Heart right ventricle (tissue), 16 donors: ENCODE measurements at regions of chr14 and their contacts with region 1.

Region 1: DNA sequence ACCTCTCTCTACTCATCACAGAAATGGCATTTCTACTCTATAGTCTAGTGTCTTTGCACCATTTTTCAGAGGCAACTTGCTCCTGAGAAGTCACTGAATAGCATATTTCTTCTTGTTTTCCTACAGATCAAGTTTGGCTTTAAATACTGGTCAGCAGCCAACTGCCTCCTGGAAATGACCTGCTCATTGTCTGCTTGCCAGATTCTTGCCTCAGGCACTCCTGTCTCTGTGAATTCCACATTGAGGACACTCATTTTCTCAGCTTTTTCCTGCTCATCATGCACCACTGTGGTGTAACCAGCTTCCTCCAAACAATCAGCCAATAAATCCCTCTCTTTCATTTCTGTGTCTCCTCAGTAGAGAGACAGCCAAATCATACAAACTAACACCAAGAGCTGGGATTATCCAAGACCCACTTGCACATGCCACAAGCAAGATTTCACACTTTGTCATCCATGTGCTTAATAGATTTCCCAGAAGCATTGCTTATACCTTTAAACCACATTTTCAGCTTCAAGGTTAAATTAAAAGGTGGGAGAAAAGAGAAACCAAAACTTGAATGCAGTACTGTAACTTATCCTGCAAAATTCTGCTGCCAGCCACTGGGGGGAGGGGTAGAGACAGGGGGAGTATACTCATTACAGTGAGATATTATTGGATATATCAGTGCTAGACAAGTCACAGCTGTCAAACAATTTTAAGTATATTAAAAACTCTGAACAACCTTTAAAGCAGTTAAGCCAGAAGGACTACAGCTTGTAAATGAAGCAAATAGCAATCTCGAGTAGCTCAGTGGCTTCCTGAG is 105.0 kb downstream of the PPP2R5E start:
- DNase-seq: peak; percentile 28 to 68
- ATAC-seq: peak; percentile 31 to 79 (median 60)
- H3K4me3 ChIP-seq: peak overlapping the region in 8 of 10 donors; percentile 4 to 31 (median 18)
- H3K27ac ChIP-seq: peak overlapping the region in 9 of 10 donors; percentile 51 to 81 (median 68)
- H3K4me1 ChIP-seq: peaks cover 18 to 78% (median 52%) of the 10 kb centered on the region in 9 donors
- H3K27me3 ChIP-seq: no peaks in the 10 kb centered on the region
- CTCF ChIP-seq: peak in 5 of 9 donors; percentile 5 to 43 (median 31)

Region 2: GRCh38 chr14:63493246-63493645 is 55.1 kb after region 1 on chr14:
- intact Hi-C with region 1: loop called in 2 of 10 experiments (anchors 5 to 10 kb)
- DNase-seq: no peak
- ATAC-seq: peak in 5 of 8 donors; percentile 41 to 75 (median 50)
- H3K4me3 ChIP-seq: no peak overlapping the region
- H3K27ac ChIP-seq: peak overlapping the region in 1 of 10 donors; percentile 36
- H3K4me1 ChIP-seq: peaks cover 0 to 67% (median 41%) of the 10 kb centered on the region in 9 donors
- H3K27me3 ChIP-seq: no peaks in the 10 kb centered on the region
- CTCF ChIP-seq: peak in 4 of 9 donors; percentile 16 to 39 (median 29)

Region 3: GRCh38 chr14:63535918-63536317 is 97.8 kb after region 1 on chr14:
- intact Hi-C with region 1: loop called in 4 of 10 experiments (anchors 5 to 10 kb)
- DNase-seq: no peak
- ATAC-seq: no peak
- H3K4me3 ChIP-seq: no peak overlapping the region
- H3K27ac ChIP-seq: no peak overlapping the region
- H3K4me1 ChIP-seq: peaks cover 0 to 5% (median 3%) of the 10 kb centered on the region in 9 donors
- H3K27me3 ChIP-seq: no peaks in the 10 kb centered on the region
- CTCF ChIP-seq: no peak